ENCODE measurements at regions of chr1 and their contacts with region 1.

Region 1: GRCh38 chr1:48677306-48678287 is 99.1 kb downstream of the BEND5 start:
- DNase-seq: peak; percentile 76
- H3K4me3 Mint-ChIP-seq: no peak overlapping the region
- H3K27ac Mint-ChIP-seq: no peak overlapping the region
- H3K4me1 Mint-ChIP-seq: peaks cover 20% of the 10 kb centered on the region
- H3K27me3 Mint-ChIP-seq: no peaks in the 10 kb centered on the region
- CTCF ChIP-seq: peak; percentile 65

Region 2: GRCh38 chr1:48659801-48660200 is 17.8 kb before region 1 on chr1:
- CTCF ChIA-PET with region 1: interaction called, 43 read pairs
- POLR2A ChIA-PET with region 1: no interaction called
- intact Hi-C with region 1: no loop called
- DNase-seq: no peak
- H3K4me3 Mint-ChIP-seq: no peak overlapping the region
- H3K27ac Mint-ChIP-seq: no peak overlapping the region
- H3K4me1 Mint-ChIP-seq: no peaks in the 10 kb centered on the region
- H3K27me3 Mint-ChIP-seq: peaks cover 73% of the 10 kb centered on the region
- CTCF ChIP-seq: no peak

Region 3: DNA sequence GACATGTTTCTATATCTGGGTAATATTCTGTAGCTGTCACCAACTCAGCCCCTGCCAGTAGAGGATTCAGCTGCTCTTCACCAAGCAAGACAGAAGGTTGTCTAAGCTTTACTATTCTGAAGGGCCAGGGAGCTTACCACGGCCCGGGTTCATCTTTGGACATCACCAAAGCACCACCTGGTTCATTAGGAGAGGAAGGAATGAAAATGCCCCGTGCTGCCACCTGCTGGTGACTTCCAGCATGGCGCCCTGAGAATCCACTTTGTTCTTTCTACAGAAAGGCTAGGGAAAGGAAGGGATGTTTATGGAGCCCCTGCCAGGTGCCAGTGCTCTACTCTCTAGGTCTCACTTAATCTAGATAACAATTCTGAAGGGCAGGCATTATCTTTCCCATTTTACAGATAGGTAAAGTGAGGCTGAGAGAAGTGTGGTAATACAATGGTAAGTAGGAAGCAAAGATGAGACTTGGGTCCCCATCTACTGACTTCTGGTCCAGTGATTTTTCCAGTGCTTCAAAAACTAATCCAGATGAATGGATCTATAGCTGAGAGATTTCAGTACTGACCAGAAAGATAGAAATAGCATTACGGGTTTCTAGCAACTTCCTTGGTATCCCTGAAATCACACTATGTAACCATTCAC is 19.6 kb after region 1 on chr1:
- CTCF ChIA-PET with region 1: interaction called, 159 read pairs
- POLR2A ChIA-PET with region 1: no interaction called
- intact Hi-C with region 1: no loop called
- DNase-seq: peak; percentile 68
- H3K4me3 Mint-ChIP-seq: no peak overlapping the region
- H3K27ac Mint-ChIP-seq: no peak overlapping the region
- H3K4me1 Mint-ChIP-seq: peaks cover 10% of the 10 kb centered on the region
- H3K27me3 Mint-ChIP-seq: peaks cover 16% of the 10 kb centered on the region
- CTCF ChIP-seq: peak; percentile 81

Region 4: GRCh38 chr1:48817505-48818114 is 140.0 kb after region 1 on chr1:
- CTCF ChIA-PET with region 1: interaction called, 65 read pairs
- POLR2A ChIA-PET with region 1: interaction called, 4 read pairs
- intact Hi-C with region 1: loop called (anchors 1 kb)
- DNase-seq: peak; percentile 72
- H3K4me3 Mint-ChIP-seq: no peak overlapping the region
- H3K27ac Mint-ChIP-seq: no peak overlapping the region
- H3K4me1 Mint-ChIP-seq: no peaks in the 10 kb centered on the region
- H3K27me3 Mint-ChIP-seq: no peaks in the 10 kb centered on the region
- CTCF ChIP-seq: peak; percentile 62

Region 5: GRCh38 chr1:48878191-48878940 is 200.8 kb after region 1 on chr1:
- CTCF ChIA-PET with region 1: interaction called, 16 read pairs
- POLR2A ChIA-PET with region 1: no interaction called
- intact Hi-C with region 1: no loop called
- DNase-seq: peak; percentile 95
- H3K4me3 Mint-ChIP-seq: peak overlapping the region; percentile 37
- H3K27ac Mint-ChIP-seq: peak overlapping the region; percentile 17
- H3K4me1 Mint-ChIP-seq: peaks cover 17% of the 10 kb centered on the region
- H3K27me3 Mint-ChIP-seq: no peaks in the 10 kb centered on the region
- CTCF ChIP-seq: no peak

Region 6: GRCh38 chr1:50348449-50349241 is 1671.0 kb after region 1 on chr1:
- CTCF ChIA-PET with region 1: interaction called, 11 read pairs
- POLR2A ChIA-PET with region 1: no interaction called
- intact Hi-C with region 1: loop called (anchors 10 kb)
- DNase-seq: peak; percentile 86
- H3K4me3 Mint-ChIP-seq: no peak overlapping the region
- H3K27ac Mint-ChIP-seq: no peak overlapping the region
- H3K4me1 Mint-ChIP-seq: no peaks in the 10 kb centered on the region
- H3K27me3 Mint-ChIP-seq: peaks cover 14% of the 10 kb centered on the region
- CTCF ChIP-seq: peak; percentile 85